GM12878 (cell line): ENCODE measurements at regions of chr12 and their contacts with region 1.

Region 1: GRCh38 chr12:62192180-62192902 is 67.9 kb upstream of the USP15 start:
- DNase-seq: peak; percentile 20
- ATAC-seq: peak; percentile 95
- H3K4me3 ChIP-seq: no peak overlapping the region
- H3K27ac ChIP-seq: no peak overlapping the region
- H3K4me1 ChIP-seq: peaks cover 3% of the 10 kb centered on the region; the same call in 1 of the 2 replicates
- H3K27me3 ChIP-seq: peaks cover 15 to 21% of the 10 kb centered on the region in 2 experiments
- CTCF ChIP-seq: peak; percentile 56 to 67 (median 66); a peak in 5 of 6 replicates
- EP300 ChIP-seq: no peak
- POLR2A ChIP-seq: no peak
- RAD21 ChIP-seq: peak; percentile 86

Region 2: GRCh38 chr12:62006076-62006732 is 186.1 kb before region 1 on chr12:
- CTCF ChIA-PET with region 1: interaction called, 4 read pairs
- POLR2A ChIA-PET with region 1: no interaction called
- RAD21 ChIA-PET with region 1: no interaction called
- SMC1A ChIA-PET with region 1: no interaction called
- in situ Hi-C with region 1: no loop called
- intact Hi-C with region 1: loop called (anchors 5 kb)
- DNase-seq: no peak
- ATAC-seq: peak; percentile 52; the same call in 2 of the 3 replicates
- H3K4me3 ChIP-seq: no peak overlapping the region
- H3K27ac ChIP-seq: no peak overlapping the region
- H3K4me1 ChIP-seq: no peaks in the 10 kb centered on the region
- H3K27me3 ChIP-seq: no peaks in the 10 kb centered on the region
- CTCF ChIP-seq: peak; percentile 58 to 67 (median 60)
- EP300 ChIP-seq: no peak
- POLR2A ChIP-seq: no peak
- RAD21 ChIP-seq: peak; percentile 65

Region 3: GRCh38 chr12:62210422-62210821 is 18.1 kb after region 1 on chr12:
- CTCF ChIA-PET with region 1: interaction called, 18 read pairs
- POLR2A ChIA-PET with region 1: no interaction called
- RAD21 ChIA-PET with region 1: interaction called, 3 read pairs
- SMC1A ChIA-PET with region 1: interaction called, 9 read pairs
- in situ Hi-C with region 1: no loop called
- intact Hi-C with region 1: no loop called
- DNase-seq: no peak
- ATAC-seq: peak; percentile 74
- H3K4me3 ChIP-seq: no peak overlapping the region
- H3K27ac ChIP-seq: no peak overlapping the region
- H3K4me1 ChIP-seq: no peaks in the 10 kb centered on the region
- H3K27me3 ChIP-seq: no peaks in the 10 kb centered on the region
- CTCF ChIP-seq: peak; percentile 71 to 88 (median 86)
- EP300 ChIP-seq: no peak
- POLR2A ChIP-seq: no peak
- RAD21 ChIP-seq: peak; percentile 67

Region 4: GRCh38 chr12:62537551-62537950 is 345.2 kb after region 1 on chr12:
- CTCF ChIA-PET with region 1: no interaction called
- POLR2A ChIA-PET with region 1: no interaction called
- RAD21 ChIA-PET with region 1: no interaction called
- SMC1A ChIA-PET with region 1: no interaction called
- in situ Hi-C with region 1: no loop called
- intact Hi-C with region 1: no loop called
- DNase-seq: no peak
- ATAC-seq: no peak
- H3K4me3 ChIP-seq: no peak overlapping the region
- H3K27ac ChIP-seq: no peak overlapping the region
- H3K4me1 ChIP-seq: no peaks in the 10 kb centered on the region
- H3K27me3 ChIP-seq: no peaks in the 10 kb centered on the region
- CTCF ChIP-seq: no peak
- EP300 ChIP-seq: no peak
- POLR2A ChIP-seq: no peak
- RAD21 ChIP-seq: no peak